ENCODE measurements at regions of chr3 and their contacts with region 1.

Region 1: GRCh38 chr3:152241142-152242017 is 27.3 kb upstream of the MBNL1 start:
- DNase-seq: peak in 3 of 14 experiments; percentile 41 to 66 (median 45)
- ATAC-seq: no peak
- H3K4me3 ChIP-seq: no peak overlapping the region
- H3K4me3 Mint-ChIP-seq: peak overlapping the region; percentile 92
- H3K27ac ChIP-seq: peak overlapping the region; percentile 68 to 76
- H3K27ac Mint-ChIP-seq: peak overlapping the region; percentile 79
- H3K4me1 ChIP-seq: peaks cover 23% of the 10 kb centered on the region
- H3K4me1 Mint-ChIP-seq: peaks cover 78% of the 10 kb centered on the region
- H3K27me3 ChIP-seq: no peaks in the 10 kb centered on the region
- H3K27me3 Mint-ChIP-seq: no peaks in the 10 kb centered on the region
- CTCF ChIP-seq: no peak

Region 2: DNA sequence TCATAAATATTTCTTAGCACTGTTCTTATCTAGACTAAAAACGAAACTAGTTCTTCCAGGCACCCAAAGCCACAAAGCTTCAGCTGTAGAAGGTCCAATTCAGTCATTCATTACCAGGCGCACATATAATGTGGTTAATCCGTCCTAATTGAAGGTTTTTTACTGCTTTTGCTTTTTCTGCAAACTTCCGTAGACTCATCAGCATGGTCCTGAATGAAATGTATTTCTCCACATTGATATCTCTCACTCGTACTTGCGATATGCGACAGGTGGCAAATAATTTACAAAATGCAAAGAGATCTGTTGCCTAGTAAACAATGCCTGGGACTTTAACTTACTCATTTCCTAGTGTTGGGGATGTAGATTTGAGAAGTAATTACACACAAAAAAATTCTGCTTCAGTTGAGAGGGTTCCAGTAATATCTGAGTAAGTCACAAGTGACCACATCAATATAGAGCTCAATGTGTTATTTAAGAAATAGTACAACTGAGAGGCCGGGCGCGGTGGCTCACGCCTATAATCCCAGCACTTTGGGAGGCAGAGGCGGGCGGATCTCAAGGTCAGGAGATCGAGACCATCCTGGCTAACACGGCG is 47.6 kb before region 1 on chr3:
- CTCF ChIA-PET with region 1: interaction called, 4 read pairs
- POLR2A ChIA-PET with region 1: interaction called, 132 read pairs
- intact Hi-C with region 1: loop called in 1 of 2 experiments (anchors 2 kb)
- DNase-seq: peak in 6 of 14 experiments; percentile 6 to 84 (median 62)
- ATAC-seq: peak; percentile 63
- H3K4me3 ChIP-seq: peak overlapping the region; percentile 50
- H3K4me3 Mint-ChIP-seq: peak overlapping the region; percentile 90
- H3K27ac ChIP-seq: peak overlapping the region; percentile 42 to 48
- H3K27ac Mint-ChIP-seq: peak overlapping the region; percentile 96
- H3K4me1 ChIP-seq: peaks cover 40% of the 10 kb centered on the region
- H3K4me1 Mint-ChIP-seq: peaks cover 87% of the 10 kb centered on the region
- H3K27me3 ChIP-seq: no peaks in the 10 kb centered on the region
- H3K27me3 Mint-ChIP-seq: no peaks in the 10 kb centered on the region
- CTCF ChIP-seq: no peak

Region 3: GRCh38 chr3:152205097-152205593 is 36.2 kb before region 1 on chr3:
- CTCF ChIA-PET with region 1: interaction called, 10 read pairs
- POLR2A ChIA-PET with region 1: interaction called, 132 read pairs
- intact Hi-C with region 1: loop called in 1 of 2 experiments (anchors 2 kb)
- DNase-seq: peak in 4 of 14 experiments; percentile 18 to 71 (median 66)
- ATAC-seq: peak; percentile 45
- H3K4me3 ChIP-seq: peak overlapping the region; percentile 47
- H3K4me3 Mint-ChIP-seq: peak overlapping the region; percentile 93
- H3K27ac ChIP-seq: peak overlapping the region; percentile 58 to 66
- H3K27ac Mint-ChIP-seq: peak overlapping the region; percentile 96
- H3K4me1 ChIP-seq: peaks cover 28% of the 10 kb centered on the region
- H3K4me1 Mint-ChIP-seq: peaks cover 87% of the 10 kb centered on the region
- H3K27me3 ChIP-seq: no peaks in the 10 kb centered on the region
- H3K27me3 Mint-ChIP-seq: no peaks in the 10 kb centered on the region
- CTCF ChIP-seq: no peak

Region 4: DNA sequence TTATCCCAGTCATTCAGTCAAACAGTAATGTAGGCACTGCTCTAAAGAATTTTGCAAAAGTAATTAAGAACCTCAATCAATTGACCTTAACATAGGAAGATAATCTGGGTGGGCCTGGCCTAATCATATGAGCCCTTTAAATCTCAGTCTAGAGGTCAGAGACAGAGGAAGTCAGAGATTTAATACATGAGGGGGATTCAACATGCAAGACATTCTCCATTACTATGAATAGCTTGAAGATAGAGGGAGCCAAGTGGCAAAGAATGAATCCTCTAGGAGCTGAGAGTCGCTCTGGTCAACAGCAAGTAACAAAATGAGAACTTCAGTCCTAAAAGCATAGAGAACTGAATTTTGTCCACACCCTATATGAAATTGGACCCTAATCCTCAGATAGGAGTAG is 11.7 kb before region 1 on chr3:
- CTCF ChIA-PET with region 1: interaction called, 7 read pairs
- POLR2A ChIA-PET with region 1: interaction called, 27 read pairs
- intact Hi-C with region 1: no loop called
- DNase-seq: no peak
- ATAC-seq: no peak
- H3K4me3 ChIP-seq: no peak overlapping the region
- H3K4me3 Mint-ChIP-seq: no peak overlapping the region
- H3K27ac ChIP-seq: no peak overlapping the region
- H3K27ac Mint-ChIP-seq: no peak overlapping the region
- H3K4me1 ChIP-seq: no peaks in the 10 kb centered on the region
- H3K4me1 Mint-ChIP-seq: peaks cover 72% of the 10 kb centered on the region
- H3K27me3 ChIP-seq: no peaks in the 10 kb centered on the region
- H3K27me3 Mint-ChIP-seq: no peaks in the 10 kb centered on the region
- CTCF ChIP-seq: no peak

Measured in CD4-positive, alpha-beta T cell (primary cell).